Naive thymus-derived CD8-positive, alpha-beta T cell (primary cell): ENCODE measurements at regions of chr6 and their contacts with region 1.

Region 1: GRCh38 chr6:170087941-170088581 is 202.8 kb downstream of the DLL1 start:
- DNase-seq: peak; percentile 19 to 77 (median 50)
- ATAC-seq: peak; percentile 72 to 76
- H3K4me3 Mint-ChIP-seq: peak overlapping the region; percentile 81 to 96 (median 90)
- H3K27ac Mint-ChIP-seq: peak overlapping the region; percentile 88 to 98 (median 96)
- H3K4me1 Mint-ChIP-seq: peaks cover 24 to 44% (median 36%) of the 10 kb centered on the region in 4 donors
- H3K27me3 Mint-ChIP-seq: no peaks in the 10 kb centered on the region

Region 2: GRCh38 chr6:170063851-170064602 is 24.0 kb before region 1 on chr6:
- POLR2A ChIA-PET with region 1: no interaction called
- DNase-seq: peak in 2 of 10 donors; percentile 10 to 30
- ATAC-seq: no peak
- H3K4me3 Mint-ChIP-seq: no peak overlapping the region
- H3K27ac Mint-ChIP-seq: no peak overlapping the region
- H3K4me1 Mint-ChIP-seq: peaks cover 0 to 2% (median 0%) of the 10 kb centered on the region in 4 donors
- H3K27me3 Mint-ChIP-seq: peaks cover 0 to 3% (median 0%) of the 10 kb centered on the region in 5 donors

Region 3: DNA sequence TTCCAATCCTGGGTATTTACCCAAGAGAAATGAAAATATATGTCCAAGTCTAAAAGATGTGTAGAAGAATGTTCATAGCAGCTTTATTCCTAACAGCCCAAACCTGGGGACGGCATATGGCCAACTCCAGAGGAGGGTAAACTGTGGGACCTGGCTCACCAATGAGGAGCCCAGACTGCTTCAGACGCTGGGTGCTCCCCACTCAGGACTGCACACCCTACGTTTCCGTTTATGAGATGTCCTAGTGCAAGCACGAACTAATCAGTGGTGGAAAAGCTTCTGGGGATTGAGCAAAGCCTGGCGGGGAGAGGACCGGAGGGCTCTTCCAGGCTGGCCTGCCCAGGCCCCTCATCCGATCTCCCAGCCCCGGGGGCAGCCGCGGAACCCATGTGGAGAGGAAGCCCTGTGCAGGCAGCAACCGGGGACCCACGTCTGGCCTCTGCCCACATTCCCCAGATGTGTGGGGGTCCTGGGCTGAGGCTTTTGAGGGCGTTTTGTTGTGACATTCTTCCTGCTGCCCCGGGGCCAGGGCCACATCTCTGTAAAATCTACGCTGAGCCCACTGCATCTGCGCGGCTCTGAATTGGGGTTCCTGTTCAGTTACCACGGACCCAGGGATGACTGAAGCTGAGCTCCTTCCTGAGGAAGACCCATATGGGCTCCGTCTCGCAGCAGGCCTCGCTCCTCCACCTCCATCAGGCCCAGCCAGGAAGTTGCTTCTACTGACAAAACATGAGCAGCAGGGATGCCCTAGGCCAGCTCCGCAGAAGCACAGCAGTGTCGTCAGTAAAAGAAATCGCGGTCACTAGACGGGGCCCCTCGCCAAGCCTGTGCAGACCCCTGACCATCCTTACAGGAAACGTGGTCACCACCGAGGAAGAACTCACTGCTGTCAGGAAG is 14.8 kb after region 1 on chr6:
- POLR2A ChIA-PET with region 1: interaction called, 19 read pairs
- DNase-seq: peak in 3 of 10 donors; percentile 19 to 53 (median 45)
- ATAC-seq: peak; percentile 70 to 94
- H3K4me3 Mint-ChIP-seq: peak overlapping the region in 4 of 10 donors; percentile 18 to 55 (median 39)
- H3K27ac Mint-ChIP-seq: peak overlapping the region; percentile 19 to 94 (median 67)
- H3K4me1 Mint-ChIP-seq: peaks cover 0 to 7% (median 5%) of the 10 kb centered on the region in 4 donors
- H3K27me3 Mint-ChIP-seq: peaks cover 0 to 13% (median 3%) of the 10 kb centered on the region in 5 donors

Region 4: GRCh38 chr6:170147832-170148708 is 60.0 kb after region 1 on chr6:
- POLR2A ChIA-PET with region 1: interaction called, 77 read pairs
- DNase-seq: peak; percentile 14 to 87 (median 68)
- ATAC-seq: peak; percentile 86 to 88
- H3K4me3 Mint-ChIP-seq: peak overlapping the region; percentile 74 to 99 (median 86)
- H3K27ac Mint-ChIP-seq: peak overlapping the region; percentile 83 to 99 (median 94)
- H3K4me1 Mint-ChIP-seq: peaks cover 59 to 80% (median 71%) of the 10 kb centered on the region in 4 donors
- H3K27me3 Mint-ChIP-seq: no peaks in the 10 kb centered on the region